ENCODE measurements at regions of chr10 and their contacts with region 1.

Region 1: GRCh38 chr10:31759799-31760626 is 168.6 kb downstream of the ARHGAP12 start:
- DNase-seq: peak; percentile 99
- H3K4me3 ChIP-seq: peak overlapping the region; percentile 78 to 97 (median 86)
- H3K27ac ChIP-seq: peak overlapping the region; percentile 89 to 97 (median 96)
- H3K4me1 ChIP-seq: peaks cover 26 to 41% (median 38%) of the 10 kb centered on the region in 4 donors
- H3K27me3 ChIP-seq: no peaks in the 10 kb centered on the region
- CTCF ChIP-seq: no peak
- EP300 ChIP-seq: no peak
- POLR2A ChIP-seq: peak; percentile 95

Region 2: GRCh38 chr10:31031558-31032257 is 728.3 kb before region 1 on chr10 and contains the start of gene ZNF438:
- intact Hi-C with region 1: loop called (anchors 10 kb)
- DNase-seq: peak; percentile 98
- H3K4me3 ChIP-seq: peak within 1 kb of the TSS; percentile 63 to 74 (median 72)
- H3K27ac ChIP-seq: peak within 1 kb of the TSS; percentile 97 to 100 (median 98)
- H3K4me1 ChIP-seq: peaks cover 22 to 50% (median 47%) of the 10 kb centered on the region in 4 donors
- H3K27me3 ChIP-seq: no peaks in the 10 kb centered on the region
- CTCF ChIP-seq: peak; percentile 47 to 61 (median 61)
- EP300 ChIP-seq: no peak
- POLR2A ChIP-seq: peak; percentile 88
- total RNA-seq, gene ZNF438: 11.0 to 11.6 (median 11.3) TPM

Region 3: DNA sequence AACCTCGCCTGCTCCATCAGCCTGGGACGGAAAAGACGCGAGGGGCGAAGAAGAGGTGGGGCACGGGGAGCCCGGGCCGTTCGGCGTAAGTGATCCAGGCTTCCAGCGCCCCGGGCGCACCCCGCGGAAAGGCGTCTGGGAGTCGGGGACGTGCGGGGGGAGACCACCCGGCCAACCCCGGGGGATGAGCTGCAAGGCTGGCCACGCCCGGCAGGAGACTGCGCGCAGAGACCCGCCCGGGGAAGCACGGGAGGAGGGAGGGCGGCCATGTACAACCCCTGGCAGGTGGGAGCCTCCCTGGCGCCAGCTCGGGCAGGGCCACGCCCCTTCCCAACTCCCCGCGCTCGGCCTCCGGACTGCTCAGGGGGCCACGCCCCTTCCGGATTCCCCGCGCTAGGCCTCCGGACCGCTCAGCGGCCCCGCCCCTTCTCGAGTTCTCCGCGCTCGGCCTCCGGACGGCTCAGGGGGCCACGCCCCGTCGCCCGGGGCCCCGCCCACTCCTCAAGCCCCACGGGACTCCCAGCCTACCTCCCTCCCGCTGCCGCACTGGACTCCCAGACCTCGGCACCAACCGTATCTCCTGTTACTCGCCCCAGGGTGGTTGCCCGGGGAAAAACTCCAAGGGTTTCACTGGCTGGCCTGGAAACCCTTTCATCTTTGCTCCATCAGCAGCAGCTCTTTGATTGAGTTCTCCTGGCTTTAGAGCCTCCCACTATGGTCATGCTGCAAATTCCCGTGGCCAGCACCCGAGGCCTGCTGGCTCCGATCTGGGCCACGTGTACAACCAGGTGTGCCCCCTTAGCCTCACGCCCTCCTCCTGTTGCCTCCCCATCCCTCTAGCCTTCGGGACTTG is 156.6 kb before region 1 on chr10:
- intact Hi-C with region 1: loop called (anchors 5 kb)
- DNase-seq: peak; percentile 98
- H3K4me3 ChIP-seq: peak overlapping the region; percentile 61 to 83 (median 66)
- H3K27ac ChIP-seq: peak overlapping the region; percentile 81 to 89 (median 87)
- H3K4me1 ChIP-seq: peaks cover 14 to 41% (median 34%) of the 10 kb centered on the region in 4 donors
- H3K27me3 ChIP-seq: no peaks in the 10 kb centered on the region
- CTCF ChIP-seq: peak in 1 of 3 experiments; percentile 10
- EP300 ChIP-seq: no peak
- POLR2A ChIP-seq: peak; percentile 88

Region 4: DNA sequence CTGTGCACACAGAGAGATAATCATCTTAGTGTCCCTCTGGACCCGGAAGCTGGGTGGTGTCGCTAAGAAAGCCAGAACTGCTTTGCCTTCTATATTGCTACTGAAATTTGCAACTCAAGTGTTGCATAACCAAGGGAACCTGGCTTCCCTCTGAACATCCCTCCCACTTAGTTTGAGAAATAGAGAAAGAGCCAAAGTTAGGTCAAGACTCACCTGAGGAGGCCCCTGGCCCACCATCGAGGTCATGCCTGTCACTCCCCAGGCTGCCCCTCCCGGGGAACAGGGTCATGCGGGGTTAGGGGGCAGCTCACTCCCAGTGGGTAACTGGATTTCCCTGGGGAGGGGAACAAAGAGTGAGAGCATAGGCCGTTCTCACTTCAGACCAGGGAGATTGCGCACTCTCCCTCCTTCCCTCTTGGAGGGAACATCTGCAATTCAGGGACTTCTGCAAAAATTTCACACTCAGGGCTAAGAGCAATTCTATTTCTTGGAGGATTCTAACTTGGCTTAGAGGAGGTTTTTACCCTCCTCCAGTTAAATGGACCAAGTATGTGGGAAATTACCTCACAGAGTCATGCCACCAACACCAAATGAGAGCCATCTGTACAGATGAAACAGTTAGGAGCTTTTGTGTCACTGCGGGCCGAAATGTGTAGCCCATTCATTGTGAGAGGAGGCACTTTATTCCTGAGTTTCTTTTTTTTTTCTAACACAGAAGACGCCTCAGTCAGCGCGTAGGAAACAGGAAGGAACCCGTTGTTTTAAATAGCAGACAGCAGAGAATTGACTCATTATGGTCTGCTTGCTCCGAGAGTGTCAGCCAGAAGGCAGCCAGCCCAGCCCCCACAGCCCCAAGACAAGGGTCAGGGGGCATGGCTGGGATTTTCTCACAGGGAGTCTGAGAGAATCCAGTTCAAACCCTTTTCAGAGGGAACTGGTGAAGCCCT is 52.6 kb before region 1 on chr10:
- intact Hi-C with region 1: loop called (anchors 5 kb)
- DNase-seq: no peak
- H3K4me3 ChIP-seq: peak overlapping the region; percentile 15 to 30 (median 24)
- H3K27ac ChIP-seq: peak overlapping the region; percentile 71 to 82 (median 74)
- H3K4me1 ChIP-seq: peaks cover 39 to 47% (median 44%) of the 10 kb centered on the region in 4 donors
- H3K27me3 ChIP-seq: no peaks in the 10 kb centered on the region
- CTCF ChIP-seq: no peak
- EP300 ChIP-seq: no peak
- POLR2A ChIP-seq: no peak

Region 5: DNA sequence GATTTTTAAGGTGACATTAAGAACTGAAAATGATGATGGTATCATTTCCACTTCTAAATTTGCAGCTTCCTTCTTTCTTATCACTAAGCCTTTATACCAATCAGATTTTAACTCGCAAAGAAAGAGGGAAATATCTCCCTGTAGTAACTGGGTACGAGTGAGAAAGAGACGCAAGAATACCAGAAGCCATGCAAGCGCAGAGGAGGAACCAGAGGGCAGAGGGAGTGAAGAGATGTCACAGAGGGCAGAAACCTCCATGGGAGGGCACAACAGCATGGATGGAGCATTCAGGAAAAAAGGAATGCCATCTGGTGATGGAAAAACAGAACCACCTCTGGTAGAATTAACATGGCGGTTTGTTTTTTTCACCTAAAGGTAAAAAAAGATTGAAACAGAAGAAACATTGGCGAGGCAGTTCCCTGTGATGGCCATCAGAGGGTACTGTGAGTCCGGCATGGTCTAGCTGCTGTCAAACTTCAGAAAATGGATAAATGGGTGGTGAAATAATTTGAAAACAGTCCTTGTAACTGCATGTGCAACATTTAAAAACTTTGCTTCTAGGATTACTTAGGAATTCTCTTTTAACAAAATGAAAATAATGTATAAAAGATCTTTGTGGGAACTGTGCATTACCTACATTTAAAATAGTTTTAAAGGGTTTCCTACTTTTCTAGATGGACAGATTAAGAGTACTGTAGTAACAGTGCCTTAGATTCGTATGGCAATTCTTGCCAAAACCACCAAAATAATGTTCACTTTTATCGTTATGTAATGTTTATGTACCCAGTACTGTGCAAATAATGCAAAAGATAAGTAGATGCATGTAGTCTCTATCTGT is 76.8 kb after region 1 on chr10:
- intact Hi-C with region 1: no loop called
- DNase-seq: no peak
- H3K4me3 ChIP-seq: no peak overlapping the region
- H3K27ac ChIP-seq: no peak overlapping the region
- H3K4me1 ChIP-seq: no peaks in the 10 kb centered on the region
- H3K27me3 ChIP-seq: no peaks in the 10 kb centered on the region
- CTCF ChIP-seq: peak; percentile 43 to 67 (median 51)
- EP300 ChIP-seq: no peak
- POLR2A ChIP-seq: no peak

Measured in esophagus muscularis mucosa (tissue), 4 donors.